ENCODE measurements at regions of chr2 and their contacts with region 1.

Region 1: DNA sequence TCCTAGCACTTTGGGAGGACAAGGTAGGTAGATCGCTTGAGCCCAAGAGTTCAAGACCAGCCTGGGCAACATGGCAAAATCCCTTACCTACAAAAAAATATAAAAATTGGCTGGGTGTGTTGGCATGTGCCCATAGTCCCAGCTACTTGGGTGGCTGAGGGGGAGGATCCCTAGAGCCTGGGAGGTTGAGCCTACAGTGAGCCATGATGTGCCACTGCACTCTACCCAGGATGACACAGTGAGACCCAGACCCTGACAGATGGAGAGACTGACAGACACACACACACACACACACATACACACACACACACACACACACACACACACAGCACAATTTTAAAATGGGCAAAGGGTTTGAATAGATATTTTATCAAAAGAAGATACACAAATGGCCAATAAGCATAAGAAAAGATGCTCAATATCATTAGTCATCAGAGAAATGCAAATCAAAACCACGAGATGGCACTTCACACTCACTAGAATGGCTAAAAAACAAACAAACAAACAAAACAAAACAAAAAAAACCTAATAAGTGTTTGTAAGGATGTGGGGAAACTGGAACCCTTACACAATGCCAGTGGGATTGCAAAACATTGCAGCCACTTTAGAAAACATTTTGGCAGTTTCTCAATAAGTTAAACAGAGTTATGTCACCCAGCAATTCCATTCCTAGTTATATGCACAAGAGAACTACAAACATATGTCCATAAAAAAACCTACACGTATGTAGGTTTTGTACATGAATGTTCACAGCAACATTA is 42.3 kb downstream of the BAZ2B start:
- DNase-seq: no peak
- ATAC-seq: no peak
- H3K4me3 Mint-ChIP-seq: no peak overlapping the region
- H3K27ac Mint-ChIP-seq: no peak overlapping the region
- H3K4me1 Mint-ChIP-seq: no peaks in the 10 kb centered on the region
- H3K27me3 Mint-ChIP-seq: no peaks in the 10 kb centered on the region

Region 2: GRCh38 chr2:159585622-159586021 is 11.6 kb after region 1 on chr2:
- CTCF ChIA-PET with region 1: no interaction called
- POLR2A ChIA-PET with region 1: no interaction called
- intact Hi-C with region 1: loop called in 1 of 2 experiments (anchors 2 kb)
- DNase-seq: no peak
- ATAC-seq: no peak
- H3K4me3 Mint-ChIP-seq: no peak overlapping the region
- H3K27ac Mint-ChIP-seq: no peak overlapping the region
- H3K4me1 Mint-ChIP-seq: no peaks in the 10 kb centered on the region
- H3K27me3 Mint-ChIP-seq: no peaks in the 10 kb centered on the region

Measured in activated CD4-positive, alpha-beta T cell treated with anti-CD3 and anti-CD28 coated beads for 36 hours (primary cell).